ENCODE measurements at regions of chrX and their contacts with region 1.

Region 1: DNA sequence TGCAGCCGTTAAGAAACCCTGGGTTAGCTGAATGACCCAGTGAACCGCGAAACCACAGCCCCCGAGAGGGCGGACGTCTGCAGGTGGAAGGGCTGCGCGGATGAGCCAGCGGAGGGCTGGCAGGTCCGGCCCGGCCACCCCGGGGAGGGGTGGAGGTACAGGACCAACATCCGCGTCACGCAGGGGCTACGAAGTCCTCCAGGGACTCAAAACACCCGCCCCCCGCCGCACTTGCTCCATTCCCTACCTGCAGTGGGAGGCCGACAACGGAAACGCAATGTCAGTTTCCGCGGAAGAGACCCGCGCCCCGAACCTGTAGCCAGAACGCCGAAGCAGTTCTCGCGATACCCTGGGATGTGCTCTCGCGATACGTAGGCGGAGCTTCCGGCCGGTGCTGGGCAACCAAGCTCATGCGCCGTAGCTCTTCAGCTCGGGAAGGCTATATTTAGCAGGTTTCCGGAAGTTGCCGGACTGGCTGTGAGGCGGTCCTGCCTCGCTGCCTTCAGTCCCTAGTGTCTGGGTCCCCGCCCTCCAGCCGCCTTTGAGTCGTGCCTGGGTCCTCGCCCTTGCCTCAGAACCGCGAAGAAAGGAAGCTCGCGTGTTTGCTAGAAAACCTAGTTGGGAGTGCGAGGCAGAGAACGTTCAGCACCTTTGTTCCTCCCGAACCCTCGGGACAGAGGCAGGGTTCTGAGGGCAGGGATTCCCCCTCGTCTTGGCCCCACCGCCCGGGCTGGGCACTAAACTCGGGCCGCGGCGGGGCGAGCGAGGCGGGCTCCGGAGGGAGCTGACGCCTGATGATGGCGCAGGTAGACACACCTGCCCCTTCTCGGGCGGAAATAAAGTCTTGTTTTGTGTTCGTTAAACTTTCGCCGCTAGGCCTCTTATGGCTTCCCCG is at the starts of genes OFD1 and TRAPPC2:
- DNase-seq: peak; percentile 96 to 98
- ATAC-seq: peak; percentile 99
- H3K4me3 ChIP-seq: peak within 1 kb of the TSS; percentile 83 to 90
- H3K27ac ChIP-seq: peak within 1 kb of the TSS in 1 of 2 donors; percentile 58
- H3K4me1 ChIP-seq: no peaks in the 10 kb centered on the region
- H3K27me3 ChIP-seq: no peaks in the 10 kb centered on the region
- total RNA-seq, gene OFD1: 23.8 to 34.6 TPM
- total RNA-seq, gene TRAPPC2: 17.4 to 18.5 TPM

Region 2: DNA sequence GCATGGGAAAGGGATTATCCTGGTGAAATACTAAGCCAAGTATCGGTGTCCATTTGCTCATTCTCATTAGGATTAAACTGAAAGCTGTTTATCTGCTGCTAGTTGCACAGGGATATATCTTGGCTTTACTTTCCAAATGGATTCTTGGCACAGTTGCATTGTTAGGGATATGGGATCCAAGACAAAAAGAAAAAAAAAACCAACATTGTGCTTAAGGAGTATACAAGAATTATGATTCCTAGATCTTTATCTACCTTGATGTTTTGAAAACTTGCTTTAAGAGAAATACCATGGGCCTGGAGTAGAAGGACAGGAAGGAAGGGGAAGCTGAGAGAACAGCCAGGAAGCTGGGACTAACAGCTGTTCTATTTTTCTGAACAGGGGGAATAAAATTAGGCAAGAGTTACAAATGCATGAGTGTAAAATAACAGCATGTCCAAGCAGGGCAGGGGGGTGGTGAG is 522.3 kb before region 1 on chrX:
- intact Hi-C with region 1: no loop called
- DNase-seq: no peak
- ATAC-seq: no peak
- H3K4me3 ChIP-seq: no peak overlapping the region
- H3K27ac ChIP-seq: no peak overlapping the region
- H3K4me1 ChIP-seq: peaks cover 0 to 4% of the 10 kb centered on the region in 2 donors
- H3K27me3 ChIP-seq: no peaks in the 10 kb centered on the region

Region 3: GRCh38 chrX:13670197-13670596 is 64.3 kb before region 1 on chrX:
- intact Hi-C with region 1: no loop called
- DNase-seq: no peak
- ATAC-seq: no peak
- H3K4me3 ChIP-seq: no peak overlapping the region
- H3K27ac ChIP-seq: no peak overlapping the region
- H3K4me1 ChIP-seq: no peaks in the 10 kb centered on the region
- H3K27me3 ChIP-seq: no peaks in the 10 kb centered on the region

Region 4: GRCh38 chrX:13688958-13689740 is 45.4 kb before region 1 on chrX and contains the start of gene RAB9A:
- intact Hi-C with region 1: loop called (anchors 5 kb)
- DNase-seq: peak; percentile 89 to 96
- ATAC-seq: peak; percentile 97
- H3K4me3 ChIP-seq: peak within 1 kb of the TSS; percentile 83 to 90
- H3K27ac ChIP-seq: peak within 1 kb of the TSS in 1 of 2 donors; percentile 88
- H3K4me1 ChIP-seq: peaks cover 0 to 3% of the 10 kb centered on the region in 2 donors
- H3K27me3 ChIP-seq: no peaks in the 10 kb centered on the region
- total RNA-seq, gene RAB9A: 18.2 to 26.2 TPM

Measured in aorta (tissue), 5 donors.